Left colon (tissue), 2 donors: ENCODE measurements at regions of chr4 and their contacts with region 1.

Region 1: GRCh38 chr4:109702950-109703663 is at the start of gene CASP6:
- DNase-seq: peak; percentile 90 to 93
- ATAC-seq: peak; percentile 81
- total RNA-seq, gene CASP6: 73.6 to 78.8 TPM

Region 2: GRCh38 chr4:109815151-109816081 is 112.3 kb after region 1 on chr4 and contains the start of gene GAR1:
- intact Hi-C with region 1: loop called in 1 of 2 experiments (anchors 10 kb)
- DNase-seq: peak; percentile 94 to 96
- ATAC-seq: peak; percentile 97
- total RNA-seq, gene GAR1: 12.8 to 17.0 TPM